Activated CD8-positive, alpha-beta T cell treated with anti-CD3 and anti-CD28 coated beads for 36 hours (primary cell): ENCODE measurements at regions of chr9 and their contacts with region 1.

Region 1: DNA sequence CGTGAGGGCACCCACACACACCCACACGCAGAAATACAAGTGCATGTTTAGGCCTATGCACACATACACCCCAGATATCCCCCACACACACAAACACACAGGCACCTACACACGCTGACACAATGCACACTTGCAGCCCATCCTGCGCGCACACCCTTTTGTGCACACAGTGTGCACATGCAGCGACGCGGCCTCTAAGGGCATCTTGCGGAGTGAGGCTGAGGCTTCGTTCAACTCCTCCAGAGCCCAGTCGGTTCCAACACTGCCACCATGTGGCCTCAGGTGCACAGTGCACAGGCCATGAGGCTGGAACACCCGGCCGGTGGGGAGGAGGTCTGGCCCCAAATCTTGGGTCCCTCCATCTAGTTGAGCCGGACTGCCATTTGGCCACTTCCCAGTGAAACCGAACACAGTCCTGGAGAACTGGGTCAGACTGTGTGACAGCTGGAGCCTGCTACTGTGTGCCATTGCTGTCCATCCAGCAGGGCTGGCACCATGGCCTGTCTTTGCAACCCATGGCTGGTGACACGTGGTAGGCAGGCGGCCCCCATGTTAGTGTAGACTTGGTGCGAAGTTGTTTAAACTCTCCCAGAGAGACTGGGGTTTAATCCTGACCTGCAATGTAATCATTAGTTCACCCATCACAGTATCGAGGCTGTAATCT is 97.7 kb upstream of the MVB12B start:
- DNase-seq: peak; percentile 79
- ATAC-seq: peak; percentile 99
- H3K4me3 Mint-ChIP-seq: no peak overlapping the region
- H3K27ac Mint-ChIP-seq: no peak overlapping the region
- H3K4me1 Mint-ChIP-seq: peaks cover 4% of the 10 kb centered on the region
- H3K27me3 Mint-ChIP-seq: peaks cover 25% of the 10 kb centered on the region
- CTCF ChIP-seq: peak; percentile 93

Region 2: GRCh38 chr9:125407974-125408900 is 820.7 kb before region 1 on chr9:
- CTCF ChIA-PET with region 1: interaction called, 9 read pairs
- POLR2A ChIA-PET with region 1: no interaction called
- intact Hi-C with region 1: loop called (anchors 5 kb)
- DNase-seq: peak; percentile 84
- ATAC-seq: peak; percentile 81
- H3K4me3 Mint-ChIP-seq: peak overlapping the region; percentile 59
- H3K27ac Mint-ChIP-seq: no peak overlapping the region
- H3K4me1 Mint-ChIP-seq: peaks cover 14% of the 10 kb centered on the region
- H3K27me3 Mint-ChIP-seq: peaks cover 16% of the 10 kb centered on the region
- CTCF ChIP-seq: peak; percentile 99

Region 3: DNA sequence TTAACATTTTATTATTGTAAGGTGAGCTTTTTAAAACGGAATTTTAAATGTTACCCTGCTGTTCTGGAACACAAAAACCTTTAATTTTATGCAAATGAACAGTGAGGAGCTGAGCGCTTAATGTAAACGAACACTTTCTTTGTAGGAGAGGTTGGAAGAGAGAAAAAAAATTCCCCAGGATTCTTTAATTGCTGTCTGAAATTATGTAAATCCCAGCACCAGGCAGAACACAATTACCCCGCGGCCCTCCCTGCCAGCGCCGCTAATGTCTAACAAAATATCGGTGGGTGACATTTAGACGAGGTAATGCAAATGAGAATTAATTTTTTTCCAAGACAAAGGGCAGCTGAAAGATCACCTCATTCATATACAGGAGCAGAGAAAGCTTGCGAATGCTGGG is 45.6 kb before region 1 on chr9:
- CTCF ChIA-PET with region 1: no interaction called
- POLR2A ChIA-PET with region 1: no interaction called
- intact Hi-C with region 1: no loop called
- DNase-seq: no peak
- ATAC-seq: no peak
- H3K4me3 Mint-ChIP-seq: no peak overlapping the region
- H3K27ac Mint-ChIP-seq: no peak overlapping the region
- H3K4me1 Mint-ChIP-seq: no peaks in the 10 kb centered on the region
- H3K27me3 Mint-ChIP-seq: peaks cover 45% of the 10 kb centered on the region
- CTCF ChIP-seq: no peak

Region 4: DNA sequence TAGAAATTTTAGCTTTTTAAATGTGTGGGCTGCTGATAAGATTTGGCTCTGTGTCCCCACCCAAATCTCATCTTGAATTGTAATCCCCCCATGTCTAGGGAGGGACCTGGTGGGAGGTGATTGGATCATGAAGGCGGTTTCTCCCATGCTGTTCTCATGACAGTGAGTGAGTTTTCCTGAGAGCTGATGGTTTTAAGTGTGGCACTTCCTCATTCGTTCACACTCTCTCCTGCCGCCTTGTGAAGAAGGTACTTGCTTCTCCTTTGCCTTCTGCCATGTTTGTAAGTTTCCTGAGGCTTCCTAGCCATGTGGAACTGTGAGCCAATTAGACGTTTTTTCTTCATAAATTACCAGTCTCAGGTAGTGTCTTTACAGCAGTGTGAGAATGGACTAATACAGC is 30.1 kb before region 1 on chr9:
- CTCF ChIA-PET with region 1: no interaction called
- POLR2A ChIA-PET with region 1: no interaction called
- intact Hi-C with region 1: no loop called
- DNase-seq: no peak
- ATAC-seq: no peak
- H3K4me3 Mint-ChIP-seq: no peak overlapping the region
- H3K27ac Mint-ChIP-seq: no peak overlapping the region
- H3K4me1 Mint-ChIP-seq: no peaks in the 10 kb centered on the region
- H3K27me3 Mint-ChIP-seq: peaks cover 48% of the 10 kb centered on the region
- CTCF ChIP-seq: no peak